ENCODE measurements at regions of chr13 and their contacts with region 1.

Region 1: DNA sequence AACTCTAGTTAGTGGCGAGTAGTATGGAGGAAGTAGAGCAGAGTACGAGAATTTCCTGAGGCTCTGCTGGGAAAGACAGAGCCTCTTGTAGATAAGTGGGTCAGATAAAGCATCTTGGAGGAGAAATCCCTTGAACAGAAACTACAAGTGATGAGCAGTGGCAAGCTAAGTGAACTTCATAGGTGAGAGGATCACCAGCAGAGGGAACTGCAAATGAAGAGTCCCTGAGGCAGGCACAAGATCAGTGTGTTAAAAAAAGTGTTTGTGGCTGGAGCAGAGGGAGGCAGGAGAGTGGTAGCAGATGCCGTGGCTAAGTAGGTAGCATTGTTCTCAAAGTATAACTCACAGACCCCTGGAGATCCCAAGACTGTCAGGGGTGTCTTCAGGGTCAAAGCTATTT is 437.6 kb downstream of the HS6ST3 start:
- DNase-seq: no peak
- H3K4me3 ChIP-seq: no peak overlapping the region
- H3K27ac ChIP-seq: no peak overlapping the region
- H3K4me1 ChIP-seq: no peaks in the 10 kb centered on the region
- H3K27me3 ChIP-seq: no peaks in the 10 kb centered on the region
- CTCF ChIP-seq: no peak

Region 2: DNA sequence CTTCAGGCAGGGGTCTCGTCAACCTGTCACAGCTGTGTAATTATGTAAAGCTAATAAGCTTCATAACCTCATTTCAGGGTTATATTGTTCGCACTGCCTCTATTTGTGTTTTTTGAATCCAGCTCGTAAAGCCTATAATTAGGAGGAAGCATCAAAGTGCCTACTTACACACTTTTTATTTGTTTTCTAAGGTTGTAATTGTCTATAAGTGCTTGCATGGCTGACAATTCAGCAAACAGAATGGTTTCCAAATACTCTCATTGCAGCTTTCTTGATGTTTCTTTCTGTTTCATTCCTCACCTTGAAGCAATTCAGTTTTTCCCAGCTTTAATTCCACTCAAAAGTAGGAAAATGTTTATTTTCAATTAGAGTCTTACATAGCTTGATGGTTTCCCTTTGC is 101.3 kb before region 1 on chr13:
- CTCF ChIA-PET with region 1: no interaction called
- dilution Hi-C with region 1: loop called (anchors 5 kb)
- in situ Hi-C with region 1: no loop called
- intact Hi-C with region 1: no loop called
- DNase-seq: no peak
- H3K4me3 ChIP-seq: no peak overlapping the region
- H3K27ac ChIP-seq: no peak overlapping the region
- H3K4me1 ChIP-seq: no peaks in the 10 kb centered on the region
- H3K27me3 ChIP-seq: no peaks in the 10 kb centered on the region
- CTCF ChIP-seq: no peak

Region 3: GRCh38 chr13:96473526-96474180 is 53.8 kb before region 1 on chr13:
- CTCF ChIA-PET with region 1: no interaction called
- dilution Hi-C with region 1: no loop called
- in situ Hi-C with region 1: no loop called
- intact Hi-C with region 1: no loop called
- DNase-seq: no peak
- H3K4me3 ChIP-seq: no peak overlapping the region
- H3K27ac ChIP-seq: no peak overlapping the region
- H3K4me1 ChIP-seq: no peaks in the 10 kb centered on the region
- H3K27me3 ChIP-seq: no peaks in the 10 kb centered on the region
- CTCF ChIP-seq: no peak

Measured in mammary epithelial cell (primary cell).